GM12878 (cell line): ENCODE measurements at regions of chr1 and their contacts with region 1.

Region 1: DNA sequence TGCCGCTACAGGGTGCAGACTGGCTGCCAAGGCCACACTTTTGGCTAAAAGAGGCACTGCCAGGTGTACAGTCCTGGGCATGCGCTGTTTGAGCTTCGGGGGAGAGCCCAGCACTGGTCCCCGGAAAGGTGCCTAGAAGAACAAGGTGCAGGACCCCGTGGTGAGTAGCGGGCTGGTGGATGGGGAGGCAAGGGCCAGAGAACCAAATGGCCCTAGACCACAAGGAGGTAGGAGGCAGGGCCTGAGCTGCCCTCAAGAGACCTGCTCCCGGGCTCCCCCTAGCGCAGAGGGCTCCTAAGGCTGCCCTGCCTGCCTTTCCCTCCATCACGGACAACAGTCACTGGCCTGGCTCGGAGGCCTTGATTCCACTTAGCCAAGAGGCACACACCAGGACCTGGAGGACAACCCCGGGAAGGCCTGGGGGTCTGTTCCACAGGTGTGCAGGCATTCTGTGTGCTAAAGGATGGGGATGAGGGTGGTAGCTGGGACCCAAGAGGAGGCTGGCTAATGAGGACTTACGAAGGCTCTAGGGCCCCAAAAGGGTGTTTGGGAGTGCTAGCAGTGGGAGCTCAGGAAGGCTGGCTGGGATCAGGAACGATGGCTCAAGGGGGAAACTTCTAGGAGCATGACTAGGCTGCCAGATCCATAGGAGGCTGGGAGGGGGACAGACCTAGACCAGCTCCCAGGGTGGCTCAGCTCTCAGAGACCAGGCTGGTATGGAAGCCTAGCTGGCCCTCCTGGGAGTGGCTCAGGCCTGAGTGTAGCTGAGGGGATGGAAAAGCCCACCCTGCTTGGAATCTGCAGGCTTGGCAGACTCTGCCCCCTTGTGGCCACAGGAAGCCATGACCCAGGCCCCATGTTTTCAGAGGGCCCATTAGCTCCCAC is 742 bp downstream of the ARTN start:
- DNase-seq: no peak
- ATAC-seq: peak; percentile 92
- H3K4me3 ChIP-seq: peak overlapping the region; percentile 60
- H3K27ac ChIP-seq: no peak overlapping the region
- H3K4me1 ChIP-seq: peaks cover 11% of the 10 kb centered on the region
- H3K27me3 ChIP-seq: no peaks in the 10 kb centered on the region
- CTCF ChIP-seq: peak; percentile 84 to 92 (median 85)
- EP300 ChIP-seq: no peak
- POLR2A ChIP-seq: no peak
- RAD21 ChIP-seq: peak; percentile 80

Region 2: GRCh38 chr1:43554444-43554992 is 379.8 kb before region 1 on chr1:
- CTCF ChIA-PET with region 1: interaction called, 12 read pairs
- POLR2A ChIA-PET with region 1: no interaction called
- RAD21 ChIA-PET with region 1: no interaction called
- SMC1A ChIA-PET with region 1: no interaction called
- in situ Hi-C with region 1: no loop called
- intact Hi-C with region 1: no loop called
- DNase-seq: no peak
- ATAC-seq: peak; percentile 73
- H3K4me3 ChIP-seq: no peak overlapping the region
- H3K27ac ChIP-seq: no peak overlapping the region
- H3K4me1 ChIP-seq: no peaks in the 10 kb centered on the region
- H3K27me3 ChIP-seq: no peaks in the 10 kb centered on the region
- CTCF ChIP-seq: peak; percentile 54 to 63 (median 59)
- EP300 ChIP-seq: no peak
- POLR2A ChIP-seq: no peak
- RAD21 ChIP-seq: peak; percentile 30; the same call in 1 of the 2 replicates

Region 3: GRCh38 chr1:43753422-43753821 is 180.9 kb before region 1 on chr1:
- CTCF ChIA-PET with region 1: interaction called, 1,117 read pairs
- POLR2A ChIA-PET with region 1: no interaction called
- RAD21 ChIA-PET with region 1: interaction called, 22 read pairs
- SMC1A ChIA-PET with region 1: interaction called, 29 read pairs
- in situ Hi-C with region 1: no loop called
- intact Hi-C with region 1: no loop called
- DNase-seq: no peak
- ATAC-seq: peak; percentile 45
- H3K4me3 ChIP-seq: no peak overlapping the region
- H3K27ac ChIP-seq: no peak overlapping the region
- H3K4me1 ChIP-seq: no peaks in the 10 kb centered on the region
- H3K27me3 ChIP-seq: no peaks in the 10 kb centered on the region
- CTCF ChIP-seq: no peak
- EP300 ChIP-seq: no peak
- POLR2A ChIP-seq: no peak
- RAD21 ChIP-seq: no peak

Region 4: GRCh38 chr1:43836267-43836951 is 97.9 kb before region 1 on chr1:
- CTCF ChIA-PET with region 1: interaction called, 13 read pairs
- POLR2A ChIA-PET with region 1: no interaction called
- RAD21 ChIA-PET with region 1: interaction called, 9 read pairs
- SMC1A ChIA-PET with region 1: interaction called, 11 read pairs
- in situ Hi-C with region 1: no loop called
- intact Hi-C with region 1: loop called (anchors 5 kb)
- DNase-seq: peak; percentile 88
- ATAC-seq: peak; percentile 69
- H3K4me3 ChIP-seq: no peak overlapping the region
- H3K27ac ChIP-seq: peak overlapping the region; percentile 95
- H3K4me1 ChIP-seq: peaks cover 67% of the 10 kb centered on the region
- H3K27me3 ChIP-seq: no peaks in the 10 kb centered on the region
- CTCF ChIP-seq: no peak
- EP300 ChIP-seq: no peak
- POLR2A ChIP-seq: 0 out of 2 replicates have a peak, but pooled peaks have one; percentile 32
- RAD21 ChIP-seq: no peak

Region 5: GRCh38 chr1:43912607-43913006 is 21.7 kb before region 1 on chr1:
- CTCF ChIA-PET with region 1: interaction called, 21 read pairs
- POLR2A ChIA-PET with region 1: no interaction called
- RAD21 ChIA-PET with region 1: interaction called, 7 read pairs
- SMC1A ChIA-PET with region 1: interaction called, 11 read pairs
- in situ Hi-C with region 1: no loop called
- intact Hi-C with region 1: no loop called
- DNase-seq: no peak
- ATAC-seq: no peak
- H3K4me3 ChIP-seq: no peak overlapping the region
- H3K27ac ChIP-seq: no peak overlapping the region
- H3K4me1 ChIP-seq: no peaks in the 10 kb centered on the region
- H3K27me3 ChIP-seq: no peaks in the 10 kb centered on the region
- CTCF ChIP-seq: no peak
- EP300 ChIP-seq: no peak
- POLR2A ChIP-seq: no peak
- RAD21 ChIP-seq: no peak

Region 6: DNA sequence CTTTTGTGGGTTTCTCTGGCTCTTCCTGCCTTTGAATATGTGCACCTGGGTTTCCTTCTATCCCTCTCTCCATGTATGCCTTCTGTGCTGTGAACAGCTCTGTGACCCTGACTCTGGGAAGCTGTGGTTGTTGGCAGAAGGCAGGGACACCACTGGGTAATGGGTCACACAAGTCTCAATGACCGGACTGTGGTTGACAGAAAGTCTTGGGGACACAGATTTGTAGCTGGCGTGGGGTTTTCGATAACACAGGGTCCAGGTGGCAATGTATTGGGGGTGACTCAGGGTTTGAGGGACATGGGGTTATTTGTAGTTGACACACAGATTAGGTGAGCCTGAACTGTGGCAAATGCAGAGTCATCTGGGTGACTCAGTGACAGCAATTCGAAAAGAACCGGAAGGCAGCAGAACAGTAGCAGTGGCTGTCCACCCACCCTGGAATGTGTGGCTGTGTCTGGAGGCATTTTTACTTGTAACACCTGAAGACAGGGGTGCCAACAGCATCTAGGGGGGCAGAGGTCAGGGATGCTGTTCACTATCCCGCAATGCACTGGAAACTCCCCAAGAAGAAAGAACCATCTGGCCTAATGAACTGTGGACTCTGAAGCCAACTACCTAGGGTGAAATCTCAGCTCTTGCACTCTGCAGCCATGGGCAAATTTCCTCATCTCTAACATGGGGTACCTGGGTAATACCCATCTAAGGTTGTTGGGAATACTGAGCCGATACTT is 109.9 kb after region 1 on chr1:
- CTCF ChIA-PET with region 1: interaction called, 28 read pairs
- POLR2A ChIA-PET with region 1: no interaction called
- RAD21 ChIA-PET with region 1: interaction called, 14 read pairs
- SMC1A ChIA-PET with region 1: interaction called, 19 read pairs
- in situ Hi-C with region 1: no loop called
- intact Hi-C with region 1: no loop called
- DNase-seq: no peak
- ATAC-seq: no peak
- H3K4me3 ChIP-seq: no peak overlapping the region
- H3K27ac ChIP-seq: no peak overlapping the region
- H3K4me1 ChIP-seq: peaks cover 9% of the 10 kb centered on the region; the same call in 1 of the 2 replicates
- H3K27me3 ChIP-seq: no peaks in the 10 kb centered on the region
- CTCF ChIP-seq: no peak
- EP300 ChIP-seq: no peak
- POLR2A ChIP-seq: no peak
- RAD21 ChIP-seq: no peak